HAP-1 (cell line): ENCODE measurements at regions of chr1 and their contacts with region 1.

Region 1: DNA sequence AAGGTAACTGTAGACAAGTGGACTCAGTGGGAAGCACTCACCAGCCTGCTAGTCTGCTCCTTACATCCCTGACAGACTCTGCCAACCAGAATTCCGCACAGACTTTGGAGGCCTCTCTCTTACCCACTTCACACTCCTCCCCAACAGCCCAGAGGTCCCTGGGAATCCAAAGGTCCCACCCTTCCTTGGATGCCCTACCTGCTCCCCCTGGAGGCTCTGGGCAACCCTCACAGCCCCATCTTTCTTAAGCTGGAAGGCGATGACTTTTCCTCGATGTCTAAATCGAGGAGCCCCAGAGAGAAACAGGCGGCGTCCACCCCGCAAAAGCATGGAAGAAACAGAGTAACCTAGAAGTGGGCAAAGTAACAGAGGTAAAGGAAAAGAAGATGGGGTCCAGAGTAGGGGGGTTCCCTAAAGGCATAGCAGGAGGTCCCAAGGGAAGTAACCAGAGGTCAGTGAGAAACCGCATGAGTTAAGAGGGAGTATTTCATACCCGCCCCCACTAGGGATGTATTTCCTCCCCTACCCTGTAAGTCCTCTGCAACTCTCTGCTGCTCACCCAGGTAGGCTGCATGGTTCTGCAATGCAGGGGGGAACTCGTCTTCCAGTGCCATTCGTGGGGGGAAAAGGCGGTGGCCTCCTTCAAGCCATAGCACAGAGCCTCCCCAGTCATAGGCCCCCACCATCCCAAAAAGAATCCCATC is 8.4 kb downstream of the ITGA10 start:
- DNase-seq: no peak
- H3K4me3 ChIP-seq: no peak overlapping the region
- H3K4me1 ChIP-seq: no peaks in the 10 kb centered on the region
- H3K27me3 ChIP-seq: no peaks in the 10 kb centered on the region

Region 2: GRCh38 chr1:145849356-145850160 is 51.9 kb before region 1 on chr1:
- in situ Hi-C with region 1: no loop called
- DNase-seq: no peak
- H3K4me3 ChIP-seq: no peak overlapping the region
- H3K4me1 ChIP-seq: no peaks in the 10 kb centered on the region; the same call in 1 of the 2 replicates
- H3K27me3 ChIP-seq: no peaks in the 10 kb centered on the region

Region 3: GRCh38 chr1:145972580-145972979 is 71.1 kb after region 1 on chr1:
- in situ Hi-C with region 1: loop called (anchors 5 kb)
- DNase-seq: no peak
- H3K4me3 ChIP-seq: no peak overlapping the region
- H3K4me1 ChIP-seq: no peaks in the 10 kb centered on the region
- H3K27me3 ChIP-seq: no peaks in the 10 kb centered on the region

Region 4: DNA sequence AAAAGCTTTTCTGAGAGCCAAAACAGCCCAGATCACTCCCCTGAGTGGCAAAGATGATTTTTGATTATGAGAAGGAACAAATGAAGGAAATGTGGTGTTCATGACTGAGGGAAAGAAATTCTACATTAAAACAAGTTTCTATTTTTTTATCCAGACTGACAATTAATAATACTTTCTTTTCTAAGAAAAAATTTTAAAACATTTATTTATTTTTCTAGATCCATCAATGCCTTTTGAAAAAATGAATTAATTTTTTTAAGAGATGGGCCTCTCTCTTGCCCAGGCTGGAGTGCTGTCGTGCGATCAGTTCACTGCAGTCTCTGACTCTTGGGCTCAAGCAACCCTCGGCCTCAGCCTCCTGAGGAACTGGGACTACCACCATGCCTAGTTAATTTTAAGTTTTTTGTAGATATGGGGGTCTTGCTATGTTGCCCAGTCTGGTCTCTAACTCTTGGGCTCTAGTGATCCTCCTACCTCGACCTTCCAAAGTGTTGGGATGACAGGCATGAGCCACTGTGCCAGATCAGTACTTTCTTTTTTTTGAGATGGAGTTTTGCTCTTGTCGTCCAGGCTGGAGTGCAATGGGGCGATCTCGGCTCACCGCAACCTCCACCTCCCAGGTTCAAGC is 106.2 kb after region 1 on chr1:
- in situ Hi-C with region 1: loop called (anchors 5 kb)
- DNase-seq: no peak
- H3K4me3 ChIP-seq: no peak overlapping the region
- H3K4me1 ChIP-seq: no peaks in the 10 kb centered on the region
- H3K27me3 ChIP-seq: no peaks in the 10 kb centered on the region

Region 5: GRCh38 chr1:146036965-146037646 is 135.6 kb after region 1 on chr1:
- in situ Hi-C with region 1: no loop called
- DNase-seq: peak; percentile 88 to 91
- H3K4me3 ChIP-seq: peak overlapping the region; percentile 55
- H3K4me1 ChIP-seq: peaks cover 6% of the 10 kb centered on the region
- H3K27me3 ChIP-seq: no peaks in the 10 kb centered on the region